Activated T-helper 1 cell treated with anti-CD3 and anti-CD28 coated beads, Interleukin-12 subunit alpha, Interleukin-12 subunit beta, Interleukin-2, Interleukin-4 antibody, amounts not matched to agents 30 ng/mL and 10 ng/mL and 1 ng/mL, durations not matched to agents 14 hours and 24 hours and 36 hours (primary cell): ENCODE measurements at regions of chr16 and their contacts with region 1.

Region 1: DNA sequence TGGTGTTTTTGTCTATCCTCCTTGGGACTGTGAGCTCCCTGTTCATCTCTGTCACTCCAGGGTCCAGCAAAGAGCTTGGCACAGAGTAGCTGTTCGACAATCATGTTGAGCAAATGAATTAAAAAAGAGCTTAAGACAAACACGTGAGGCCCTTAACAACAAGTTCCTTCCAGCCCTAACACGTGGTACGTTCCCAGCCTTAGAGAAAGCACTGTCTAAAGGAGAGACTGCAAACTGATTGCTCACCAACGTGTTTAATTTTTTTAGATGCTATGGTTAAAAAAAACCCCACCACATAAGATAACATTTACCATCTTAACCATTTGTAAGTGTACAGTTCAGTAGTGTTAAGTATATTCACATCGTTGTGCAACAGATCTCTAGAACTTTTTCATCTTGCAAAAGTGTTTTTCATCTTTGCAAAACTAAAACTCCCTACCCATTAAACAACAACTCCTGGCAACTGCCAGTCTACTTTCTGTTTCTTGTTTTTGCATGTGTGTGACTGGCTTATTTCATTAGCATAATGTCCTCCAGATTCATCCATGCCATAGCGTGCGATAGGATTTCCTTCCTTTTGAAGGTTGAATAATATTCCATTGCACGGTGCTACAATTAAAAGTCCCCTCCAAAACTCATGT is 28.2 kb downstream of the LAT start:
- DNase-seq: no peak
- H3K4me3 Mint-ChIP-seq: peak overlapping the region; percentile 56
- H3K27ac Mint-ChIP-seq: peak overlapping the region; percentile 92
- H3K4me1 Mint-ChIP-seq: peaks cover 55% of the 10 kb centered on the region
- H3K27me3 Mint-ChIP-seq: no peaks in the 10 kb centered on the region

Region 2: GRCh38 chr16:28984619-28985135 is 28.4 kb before region 1 on chr16 and contains the start of gene LAT:
- intact Hi-C with region 1: loop called (anchors 1 kb)
- DNase-seq: peak; percentile 72
- H3K4me3 Mint-ChIP-seq: peak within 1 kb of the TSS; percentile 90
- H3K27ac Mint-ChIP-seq: peak within 1 kb of the TSS; percentile 98
- H3K4me1 Mint-ChIP-seq: peaks cover 42% of the 10 kb centered on the region
- H3K27me3 Mint-ChIP-seq: no peaks in the 10 kb centered on the region
- total RNA-seq, gene LAT: 230 and 234 TPM in 2 replicates

Region 3: GRCh38 chr16:29315615-29316517 is 302.8 kb after region 1 on chr16:
- intact Hi-C with region 1: no loop called
- DNase-seq: no peak
- H3K4me3 Mint-ChIP-seq: no peak overlapping the region
- H3K27ac Mint-ChIP-seq: no peak overlapping the region
- H3K4me1 Mint-ChIP-seq: no peaks in the 10 kb centered on the region
- H3K27me3 Mint-ChIP-seq: no peaks in the 10 kb centered on the region